OCI-LY7 (cell line): ENCODE measurements at regions of chr7 and their contacts with region 1.

Region 1: GRCh38 chr7:2288503-2288902 is 25.7 kb downstream of the SNX8 start:
- DNase-seq: peak; percentile 73
- H3K4me3 ChIP-seq: no peak overlapping the region
- H3K27ac ChIP-seq: peak overlapping the region; percentile 37
- H3K4me1 ChIP-seq: peaks cover 19% of the 10 kb centered on the region
- CTCF ChIP-seq: no peak

Region 2: DNA sequence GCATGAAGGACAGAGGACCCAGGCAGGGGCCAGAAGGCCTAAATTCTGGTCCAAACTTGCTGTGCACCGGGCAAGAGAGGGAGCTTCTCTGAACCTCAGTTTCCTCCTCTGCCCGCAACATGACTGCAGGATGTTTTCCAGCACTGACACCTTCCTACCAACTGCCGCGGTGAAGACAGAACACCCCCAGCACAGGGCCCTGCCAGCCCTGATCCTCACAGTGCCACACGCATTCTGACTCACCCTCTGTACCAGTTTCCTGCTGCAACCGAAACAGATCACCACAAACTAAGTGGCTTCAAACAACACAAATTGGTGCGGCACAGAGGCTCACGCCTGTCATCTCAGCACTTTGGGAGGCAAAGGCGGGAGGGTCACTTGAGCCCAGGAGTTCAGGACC is 73.9 kb before region 1 on chr7:
- CTCF ChIA-PET with region 1: no interaction called
- POLR2A ChIA-PET with region 1: no interaction called
- intact Hi-C with region 1: no loop called
- DNase-seq: no peak
- H3K4me3 ChIP-seq: no peak overlapping the region
- H3K27ac ChIP-seq: no peak overlapping the region
- H3K4me1 ChIP-seq: no peaks in the 10 kb centered on the region
- CTCF ChIP-seq: no peak

Region 3: DNA sequence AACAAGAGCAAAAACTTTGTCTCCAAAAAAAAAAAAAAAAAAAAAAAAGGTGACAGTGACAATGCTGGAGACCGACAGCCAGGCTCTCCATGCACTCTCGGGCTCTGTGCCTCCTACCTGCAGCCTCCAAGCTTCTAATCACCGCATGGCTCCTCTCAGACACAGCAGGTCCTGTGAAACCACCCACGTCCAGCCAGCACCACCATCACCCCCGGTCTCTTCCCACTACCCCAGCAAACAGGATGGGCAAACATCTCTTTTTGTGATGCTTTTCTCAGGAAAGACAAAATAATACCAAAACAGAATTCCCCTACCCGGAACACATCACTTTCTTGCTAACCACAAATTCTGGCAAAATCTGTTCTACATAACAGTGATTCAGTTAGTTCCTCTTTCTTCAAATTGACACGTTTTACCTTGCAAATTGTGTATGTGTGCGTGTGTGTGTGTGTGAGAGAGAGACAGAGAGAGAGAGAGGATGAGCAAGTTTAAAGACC is 19.2 kb after region 1 on chr7:
- CTCF ChIA-PET with region 1: no interaction called
- POLR2A ChIA-PET with region 1: no interaction called
- intact Hi-C with region 1: loop called (anchors 2 kb)
- DNase-seq: peak; percentile 86
- H3K4me3 ChIP-seq: peak overlapping the region; percentile 72
- H3K27ac ChIP-seq: peak overlapping the region; percentile 85
- H3K4me1 ChIP-seq: peaks cover 47% of the 10 kb centered on the region
- CTCF ChIP-seq: no peak

Region 4: DNA sequence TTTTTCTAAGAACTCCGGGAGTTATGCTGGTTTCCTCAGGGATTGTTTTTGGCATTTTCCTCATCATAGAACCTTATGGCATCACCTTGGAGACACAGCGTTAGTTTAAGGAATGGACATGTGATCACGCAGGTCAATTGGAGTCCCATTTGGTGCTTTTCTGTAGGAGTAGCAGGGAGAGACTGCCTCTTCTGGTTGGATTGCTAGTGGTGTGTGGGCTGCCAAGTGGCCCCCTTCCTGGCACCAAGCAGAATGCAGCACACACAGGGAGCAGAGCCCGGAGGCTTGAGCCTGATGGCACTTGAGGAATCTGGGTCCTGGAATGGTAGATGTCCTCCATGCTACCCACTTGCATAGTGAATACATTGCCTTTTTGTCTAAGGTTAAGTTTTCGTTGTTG is 1070.5 kb after region 1 on chr7:
- CTCF ChIA-PET with region 1: no interaction called
- POLR2A ChIA-PET with region 1: no interaction called
- intact Hi-C with region 1: no loop called
- DNase-seq: no peak
- H3K4me3 ChIP-seq: no peak overlapping the region
- H3K27ac ChIP-seq: no peak overlapping the region
- H3K4me1 ChIP-seq: no peaks in the 10 kb centered on the region
- CTCF ChIP-seq: no peak